Ovary (tissue), 10 donors: ENCODE measurements at regions of chr2 and their contacts with region 1.

Region 1: GRCh38 chr2:47941936-47942335 is 35.6 kb upstream of the FBXO11 start:
- DNase-seq: no peak
- H3K4me3 ChIP-seq: no peak overlapping the region
- H3K27ac ChIP-seq: no peak overlapping the region
- H3K4me1 ChIP-seq: no peaks in the 10 kb centered on the region
- H3K27me3 ChIP-seq: no peaks in the 10 kb centered on the region
- CTCF ChIP-seq: no peak
- EP300 ChIP-seq: no peak
- POLR2A ChIP-seq: no peak

Region 2: GRCh38 chr2:48080534-48081316 is 138.8 kb after region 1 on chr2:
- intact Hi-C with region 1: loop called in 1 of 4 experiments (anchors 5 kb)
- DNase-seq: no peak
- H3K4me3 ChIP-seq: no peak overlapping the region
- H3K27ac ChIP-seq: no peak overlapping the region
- H3K4me1 ChIP-seq: no peaks in the 10 kb centered on the region
- H3K27me3 ChIP-seq: no peaks in the 10 kb centered on the region
- CTCF ChIP-seq: no peak
- EP300 ChIP-seq: no peak
- POLR2A ChIP-seq: no peak